Activated CD4-positive, alpha-beta T cell treated with anti-CD3 and anti-CD28 coated beads, Interleukin-2, amount 10 ng/mL, durations not matched to agents 24 days and 14 days (primary cell): ENCODE measurements at regions of chr1 and their contacts with region 1.

Region 1: GRCh38 chr1:51519048-51519864 is at the start of gene EPS15:
- DNase-seq: peak; percentile 95
- H3K4me3 Mint-ChIP-seq: peak within 1 kb of the TSS; percentile 88
- H3K27ac Mint-ChIP-seq: peak within 1 kb of the TSS; percentile 89
- H3K4me1 Mint-ChIP-seq: peaks cover 48% of the 10 kb centered on the region
- H3K27me3 Mint-ChIP-seq: no peaks in the 10 kb centered on the region
- total RNA-seq, gene EPS15: 55.0 and 62.6 TPM in 2 replicates

Region 2: DNA sequence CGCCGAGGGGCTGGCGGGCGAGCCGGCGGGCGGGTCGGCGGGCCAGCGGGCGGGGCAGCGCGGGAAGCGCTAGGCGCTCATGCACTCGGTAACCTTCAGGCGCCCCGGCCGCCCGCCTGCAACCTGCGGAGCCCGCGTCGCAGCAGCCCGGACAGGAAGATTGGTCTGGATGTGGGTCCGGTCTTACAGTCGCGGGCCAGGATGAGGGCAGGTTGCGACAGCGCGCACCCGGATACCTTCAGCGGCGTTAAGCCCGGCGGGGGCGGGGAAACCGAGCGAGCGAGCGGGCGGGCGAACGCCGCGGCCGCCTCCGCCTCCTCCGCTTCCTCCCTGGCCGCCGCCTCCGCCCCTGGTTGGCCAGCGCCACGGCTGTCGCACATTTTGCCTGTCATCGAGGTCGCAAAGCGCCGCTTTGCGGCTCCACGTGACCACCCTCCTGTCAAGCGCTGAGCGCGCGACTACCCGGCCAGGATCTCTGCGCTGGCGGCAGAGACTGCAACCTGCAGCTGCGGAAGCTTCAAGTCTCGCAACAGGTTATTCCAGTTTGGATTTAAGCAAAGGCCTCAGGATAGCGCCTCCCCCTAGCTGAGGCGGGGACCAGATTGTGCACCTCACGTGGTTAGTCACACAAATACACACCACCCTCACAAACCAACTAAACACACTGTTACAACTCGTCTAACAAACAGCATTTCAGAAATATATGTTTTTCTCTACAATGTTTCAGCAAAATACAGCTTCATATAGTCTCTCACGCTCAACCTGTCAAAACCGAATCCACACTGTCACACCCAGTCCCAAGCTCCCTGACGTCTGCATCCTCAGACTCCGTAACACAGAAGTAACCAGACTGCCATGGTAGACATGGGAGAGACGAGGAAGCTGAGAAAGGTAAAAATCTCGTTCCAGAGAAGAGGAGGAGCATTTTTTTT is 559.1 kb before region 1 on chr1 and contains the start of gene FAF1:
- intact Hi-C with region 1: loop called (anchors 10 kb)
- DNase-seq: peak; percentile 100
- H3K4me3 Mint-ChIP-seq: peak within 1 kb of the TSS; percentile 87
- H3K27ac Mint-ChIP-seq: peak within 1 kb of the TSS; percentile 95
- H3K4me1 Mint-ChIP-seq: peaks cover 18% of the 10 kb centered on the region
- H3K27me3 Mint-ChIP-seq: peaks cover 10% of the 10 kb centered on the region
- total RNA-seq, gene FAF1: 63.7 and 67.2 TPM in 2 replicates

Region 3: DNA sequence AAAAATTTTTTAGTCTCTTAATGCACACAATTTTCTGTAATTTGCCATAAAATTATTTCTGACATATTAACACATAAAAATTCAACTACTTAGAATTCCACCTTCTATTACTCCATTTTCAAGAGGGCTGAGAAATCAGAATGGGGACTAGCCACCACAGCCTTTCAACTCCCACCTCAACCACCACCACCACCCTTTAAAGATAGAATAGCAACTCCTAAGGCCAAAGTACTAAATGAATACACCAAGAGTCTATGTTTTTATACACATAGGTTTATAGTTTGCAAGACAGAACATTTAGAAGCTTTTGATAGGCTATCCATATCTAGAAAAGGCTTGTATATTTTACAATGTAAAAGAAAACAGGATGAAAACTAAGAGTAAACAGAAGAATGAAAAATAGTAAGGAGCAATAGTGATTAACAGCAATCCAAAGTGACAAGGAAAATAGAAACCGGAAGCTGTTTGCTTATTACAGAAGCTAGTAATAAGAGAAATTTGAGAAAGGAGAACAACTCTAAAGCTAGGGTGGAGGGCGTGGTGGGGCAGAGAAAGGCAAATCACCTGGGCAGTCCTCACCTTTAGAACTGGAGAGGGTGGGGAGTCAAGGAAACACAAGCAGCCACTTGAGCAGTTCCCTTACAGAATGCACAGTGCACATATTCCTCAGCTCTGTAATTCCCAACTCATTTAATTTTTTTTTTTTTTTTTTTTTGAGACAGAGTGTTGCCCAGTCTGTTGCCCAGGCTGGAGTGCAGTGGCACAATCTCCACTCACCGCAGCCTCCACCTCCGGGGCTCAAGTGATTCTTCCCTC is 27.9 kb before region 1 on chr1:
- intact Hi-C with region 1: no loop called
- DNase-seq: no peak
- H3K4me3 Mint-ChIP-seq: no peak overlapping the region
- H3K27ac Mint-ChIP-seq: no peak overlapping the region
- H3K4me1 Mint-ChIP-seq: peaks cover 22% of the 10 kb centered on the region
- H3K27me3 Mint-ChIP-seq: no peaks in the 10 kb centered on the region

Region 4: GRCh38 chr1:51504806-51505525 is 14.3 kb before region 1 on chr1:
- intact Hi-C with region 1: loop called (anchors 1 kb)
- DNase-seq: no peak
- H3K4me3 Mint-ChIP-seq: no peak overlapping the region
- H3K27ac Mint-ChIP-seq: peak overlapping the region; percentile 73
- H3K4me1 Mint-ChIP-seq: peaks cover 18% of the 10 kb centered on the region
- H3K27me3 Mint-ChIP-seq: no peaks in the 10 kb centered on the region

Region 5: DNA sequence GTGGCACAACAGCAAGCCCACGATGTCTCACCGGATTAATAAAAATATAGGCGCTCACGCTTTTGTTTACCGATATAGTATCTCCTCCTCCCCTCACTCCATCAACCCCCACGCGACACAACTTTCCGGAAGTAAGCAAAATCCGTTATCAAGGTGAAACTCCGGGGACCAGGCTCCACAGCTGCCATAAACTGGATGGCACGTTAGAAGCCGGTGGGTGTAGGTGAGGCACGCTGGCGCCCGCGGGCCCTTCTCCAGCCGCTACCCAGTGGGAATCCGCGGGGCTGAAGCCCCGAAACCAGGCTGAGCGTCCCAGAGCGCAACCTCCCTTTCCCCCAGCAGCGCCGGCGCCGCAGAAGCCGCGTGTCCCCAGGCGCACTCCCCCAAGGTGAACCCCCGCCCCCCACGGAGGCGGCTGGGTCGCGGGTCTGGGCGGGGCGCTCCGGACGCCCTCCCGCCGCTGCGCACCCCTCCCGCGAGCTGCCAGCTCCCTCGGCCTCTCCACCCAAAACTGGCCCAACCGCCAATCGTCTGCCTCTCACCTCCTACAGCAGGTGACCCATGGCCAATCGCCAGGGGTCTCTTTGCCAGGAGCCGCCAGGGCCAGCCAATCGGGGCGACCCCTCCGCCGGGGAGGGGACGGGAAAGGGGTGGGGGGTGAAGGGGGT is 210.0 kb after region 1 on chr1:
- intact Hi-C with region 1: loop called (anchors 2 kb)
- DNase-seq: peak; percentile 98
- H3K4me3 Mint-ChIP-seq: peak overlapping the region; percentile 94
- H3K27ac Mint-ChIP-seq: peak overlapping the region; percentile 91
- H3K4me1 Mint-ChIP-seq: peaks cover 19% of the 10 kb centered on the region
- H3K27me3 Mint-ChIP-seq: no peaks in the 10 kb centered on the region

Region 6: DNA sequence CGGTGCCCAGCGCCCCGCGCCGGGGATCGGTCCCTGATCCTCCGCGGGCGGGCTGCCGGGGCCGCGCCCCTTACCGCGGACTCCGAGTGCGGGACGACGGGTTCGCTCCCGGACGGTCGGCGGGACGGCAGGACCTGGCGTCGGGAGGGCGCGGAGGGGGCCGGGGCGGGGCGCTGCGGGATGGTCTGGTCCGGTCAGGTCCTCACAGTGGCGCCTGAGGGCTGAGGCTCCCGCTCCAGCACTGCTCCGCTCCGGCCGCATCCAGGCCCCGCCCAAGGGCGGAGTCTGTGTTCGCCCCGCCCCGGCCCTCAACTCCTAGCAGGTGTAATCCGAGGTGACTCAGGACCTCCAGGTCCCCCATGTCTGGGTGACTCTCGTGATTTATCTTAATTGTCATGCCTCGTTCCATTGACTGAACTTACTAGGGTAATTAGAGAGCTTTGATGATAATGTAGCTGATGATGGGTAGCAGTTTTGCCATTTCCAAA is 471.3 kb after region 1 on chr1 and contains the start of gene RAB3B:
- intact Hi-C with region 1: no loop called
- DNase-seq: peak; percentile 92
- H3K4me3 Mint-ChIP-seq: peak within 1 kb of the TSS; percentile 78
- H3K27ac Mint-ChIP-seq: no peak within 1 kb of the TSS
- H3K4me1 Mint-ChIP-seq: peaks cover 9% of the 10 kb centered on the region
- H3K27me3 Mint-ChIP-seq: peaks cover 50% of the 10 kb centered on the region
- total RNA-seq, gene RAB3B: 0.02 TPM in 2 replicates

Region 7: DNA sequence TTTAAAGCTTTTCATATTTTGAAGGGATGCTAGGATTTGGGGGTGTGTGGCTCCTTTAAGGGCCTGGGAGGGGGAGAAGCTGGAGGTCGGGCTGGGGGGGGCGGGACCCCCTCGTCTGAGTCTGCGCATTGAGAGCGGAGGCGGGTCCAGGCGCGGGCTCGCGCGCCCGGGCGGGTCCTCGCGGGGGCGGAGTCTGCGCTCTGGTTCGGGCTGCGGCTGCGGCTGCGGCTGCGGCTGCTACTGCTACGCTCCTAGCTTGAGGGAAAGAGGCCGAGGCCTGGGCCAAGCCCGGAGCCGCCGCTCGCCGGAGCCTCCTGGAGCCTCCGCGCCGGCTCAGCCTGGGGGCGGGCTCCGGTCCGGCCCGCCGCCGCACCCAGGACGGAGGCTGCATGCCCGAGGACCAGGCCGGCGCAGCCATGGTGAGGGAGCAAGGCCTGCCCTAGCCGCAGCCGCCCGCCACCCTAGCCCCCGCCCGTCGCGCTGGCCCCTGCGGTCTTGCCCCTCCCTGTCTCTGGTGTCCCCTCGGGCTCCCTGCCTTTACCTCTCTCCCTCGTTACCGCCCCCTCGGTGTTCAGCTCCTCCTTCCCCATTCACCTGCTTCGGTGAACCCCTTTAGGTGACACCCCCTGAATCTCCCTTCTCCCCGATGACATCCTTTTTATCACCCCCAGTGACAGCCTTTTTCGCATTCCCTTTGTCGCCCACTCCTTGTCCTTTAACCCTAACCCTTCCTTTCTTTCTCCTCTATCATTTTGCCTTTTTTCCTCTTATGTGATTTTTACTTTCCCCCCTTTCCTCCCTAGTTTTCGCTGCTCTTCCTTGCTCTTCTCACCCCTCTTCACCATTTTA is 1207.2 kb after region 1 on chr1 and contains the start of gene ZYG11B:
- intact Hi-C with region 1: loop called (anchors 2 kb)
- DNase-seq: peak; percentile 97
- H3K4me3 Mint-ChIP-seq: peak within 1 kb of the TSS; percentile 91
- H3K27ac Mint-ChIP-seq: peak within 1 kb of the TSS; percentile 80
- H3K4me1 Mint-ChIP-seq: peaks cover 30% of the 10 kb centered on the region
- H3K27me3 Mint-ChIP-seq: peaks cover 2% of the 10 kb centered on the region
- total RNA-seq, gene ZYG11B: 9.3 and 10.2 TPM in 2 replicates